ENCODE measurements at regions of chr12 and their contacts with region 1.

Region 1: GRCh38 chr12:12266873-12267741 is at the start of gene LRP6:
- DNase-seq: peak; percentile 80 to 98 (median 88)

Region 2: GRCh38 chr12:11648831-11649702 is 618.0 kb before region 1 on chr12 and contains the start of gene ETV6:
- intact Hi-C with region 1: loop called (anchors 5 kb)
- DNase-seq: peak in 9 of 10 donors; percentile 33 to 91 (median 57)

Region 3: GRCh38 chr12:12138203-12139154 is 128.6 kb before region 1 on chr12:
- intact Hi-C with region 1: no loop called
- DNase-seq: no peak

Region 4: DNA sequence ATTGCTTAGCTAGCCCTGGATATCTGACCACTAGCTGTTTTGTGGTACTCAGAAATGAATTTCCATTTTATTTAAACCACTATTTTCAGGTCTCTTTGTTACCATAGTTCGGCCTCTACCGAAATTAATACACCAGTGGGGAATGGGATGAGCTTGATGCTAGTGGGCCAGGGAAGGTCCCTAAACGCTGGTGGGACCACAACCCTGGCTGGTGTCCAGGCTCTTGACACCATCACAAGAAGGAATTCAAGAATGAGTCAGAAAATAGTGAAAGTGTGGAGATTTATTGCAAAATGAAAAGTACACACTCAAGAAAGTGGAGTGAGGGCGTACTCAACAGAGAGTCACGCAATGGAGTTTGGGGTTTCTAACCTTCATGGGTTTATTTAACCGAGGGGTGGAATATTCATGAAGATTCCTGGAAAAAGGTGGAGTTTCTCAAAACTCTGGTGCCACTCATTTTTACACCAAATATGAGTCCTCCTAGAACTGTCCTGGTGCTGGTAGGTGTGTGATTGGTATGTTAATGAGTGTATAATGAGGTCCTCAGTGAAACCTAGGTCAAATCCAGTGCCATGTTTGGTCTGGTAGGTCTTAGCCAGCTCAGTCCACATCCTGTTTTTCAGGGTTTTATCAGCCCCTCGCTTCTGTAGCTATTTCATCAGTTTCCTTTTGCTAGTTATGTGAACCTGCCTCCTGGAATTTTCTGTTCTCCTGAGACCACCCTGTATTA is 38.6 kb after region 1 on chr12:
- intact Hi-C with region 1: no loop called
- DNase-seq: no peak

Region 5: GRCh38 chr12:12327802-12328201 is 60.7 kb after region 1 on chr12:
- intact Hi-C with region 1: loop called (anchors 2 kb)
- DNase-seq: no peak

Region 6: DNA sequence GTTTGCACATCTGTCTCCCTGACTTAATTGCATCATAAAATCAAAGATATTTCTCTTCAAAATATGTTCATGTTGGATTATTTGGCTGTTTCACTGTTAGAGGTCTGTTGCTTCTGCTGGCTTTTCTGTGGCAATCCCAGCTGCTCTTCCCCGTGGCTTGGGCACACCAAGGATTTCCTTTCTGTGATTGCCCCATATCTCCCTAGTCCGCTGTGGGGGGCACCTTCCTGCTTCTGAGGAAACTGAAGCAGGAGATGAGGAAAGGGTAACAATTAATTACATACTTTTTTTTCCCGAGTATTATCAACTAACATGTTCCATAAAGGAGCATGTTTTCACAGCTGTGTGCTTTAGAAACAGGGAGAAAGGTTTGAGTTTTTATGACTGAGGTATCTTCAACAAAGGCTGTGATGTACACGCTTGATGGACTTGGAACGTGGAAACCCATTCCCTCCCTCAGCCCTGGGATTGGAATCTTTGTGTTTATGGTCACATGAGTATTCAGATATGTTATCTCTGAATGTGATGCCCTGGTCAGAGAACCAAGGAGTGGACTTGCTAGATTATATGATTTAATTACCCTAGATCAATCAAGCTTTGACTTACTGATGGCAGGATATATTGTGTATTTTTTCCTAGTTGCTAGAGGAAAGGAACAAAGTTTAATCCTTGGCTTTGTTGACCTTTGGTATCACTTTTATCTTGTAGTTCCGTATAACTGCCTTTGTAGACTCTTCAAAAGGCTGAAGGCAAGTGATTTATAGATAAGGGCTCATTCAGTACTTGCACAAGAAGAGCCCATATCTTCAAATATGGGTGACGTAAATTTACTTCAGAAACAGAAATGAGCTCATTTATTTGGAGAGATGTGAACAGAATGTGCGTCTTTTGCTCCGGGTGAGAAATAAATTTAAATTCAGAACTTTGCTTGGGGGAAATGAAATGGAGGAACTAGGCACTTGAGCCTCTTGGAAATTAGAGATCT is 136.4 kb after region 1 on chr12:
- intact Hi-C with region 1: no loop called
- DNase-seq: no peak

Region 7: GRCh38 chr12:12474931-12475795 is 208.1 kb after region 1 on chr12:
- intact Hi-C with region 1: no loop called
- DNase-seq: no peak

Region 8: GRCh38 chr12:12724661-12725545 is 457.8 kb after region 1 on chr12:
- intact Hi-C with region 1: loop called (anchors 5 kb)
- DNase-seq: peak; percentile 77 to 98 (median 86)